ENCODE measurements at regions of chr11 and their contacts with region 1.

Region 1: GRCh38 chr11:71530602-71531001 is 3.5 kb downstream of the KRTAP5-7 start:
- DNase-seq: no peak
- H3K4me3 ChIP-seq: no peak overlapping the region
- H3K27me3 ChIP-seq: no peaks in the 10 kb centered on the region
- CTCF ChIP-seq: no peak

Region 2: GRCh38 chr11:71425855-71426254 is 104.7 kb before region 1 on chr11:
- CTCF ChIA-PET with region 1: no interaction called
- POLR2A ChIA-PET with region 1: no interaction called
- DNase-seq: no peak
- H3K4me3 ChIP-seq: no peak overlapping the region
- H3K27me3 ChIP-seq: peaks cover 2% of the 10 kb centered on the region
- CTCF ChIP-seq: no peak

Region 3: DNA sequence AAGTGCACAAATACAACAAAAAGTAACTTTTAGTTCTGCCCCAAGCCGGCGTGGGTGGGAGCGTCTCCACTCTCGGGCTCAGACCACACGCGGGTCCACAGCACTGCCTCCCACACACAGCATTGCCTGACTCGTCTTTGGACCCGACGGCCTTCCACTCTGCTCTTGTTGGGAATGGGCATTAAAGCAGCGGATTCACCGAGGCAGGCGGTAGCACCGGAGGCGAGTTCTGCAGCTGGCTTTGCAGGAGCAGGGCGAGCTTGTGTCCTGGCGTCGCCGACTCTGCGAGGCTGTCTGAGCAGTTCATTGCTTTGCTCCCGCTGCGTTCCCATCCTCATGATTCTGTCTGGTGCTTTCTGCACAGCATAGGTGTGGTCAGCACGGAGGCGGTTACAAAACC is 54.5 kb before region 1 on chr11:
- CTCF ChIA-PET with region 1: no interaction called
- POLR2A ChIA-PET with region 1: interaction called, 15 read pairs
- DNase-seq: no peak
- H3K4me3 ChIP-seq: no peak overlapping the region
- H3K27me3 ChIP-seq: no peaks in the 10 kb centered on the region
- CTCF ChIP-seq: no peak

Measured in BJ (cell line).